OCI-LY7 (cell line): ENCODE measurements at regions of chr6 and their contacts with region 1.

Region 1: GRCh38 chr6:89412071-89413005 is at the start of gene RRAGD:
- DNase-seq: peak; percentile 74
- H3K4me3 ChIP-seq: peak within 1 kb of the TSS; percentile 84
- H3K27ac ChIP-seq: peak within 1 kb of the TSS; percentile 12
- H3K4me1 ChIP-seq: peaks cover 38% of the 10 kb centered on the region
- CTCF ChIP-seq: peak; percentile 37; the same call in 1 of the 2 replicates
- total RNA-seq, gene RRAGD: 6.2 and 6.5 TPM in 2 replicates

Region 2: DNA sequence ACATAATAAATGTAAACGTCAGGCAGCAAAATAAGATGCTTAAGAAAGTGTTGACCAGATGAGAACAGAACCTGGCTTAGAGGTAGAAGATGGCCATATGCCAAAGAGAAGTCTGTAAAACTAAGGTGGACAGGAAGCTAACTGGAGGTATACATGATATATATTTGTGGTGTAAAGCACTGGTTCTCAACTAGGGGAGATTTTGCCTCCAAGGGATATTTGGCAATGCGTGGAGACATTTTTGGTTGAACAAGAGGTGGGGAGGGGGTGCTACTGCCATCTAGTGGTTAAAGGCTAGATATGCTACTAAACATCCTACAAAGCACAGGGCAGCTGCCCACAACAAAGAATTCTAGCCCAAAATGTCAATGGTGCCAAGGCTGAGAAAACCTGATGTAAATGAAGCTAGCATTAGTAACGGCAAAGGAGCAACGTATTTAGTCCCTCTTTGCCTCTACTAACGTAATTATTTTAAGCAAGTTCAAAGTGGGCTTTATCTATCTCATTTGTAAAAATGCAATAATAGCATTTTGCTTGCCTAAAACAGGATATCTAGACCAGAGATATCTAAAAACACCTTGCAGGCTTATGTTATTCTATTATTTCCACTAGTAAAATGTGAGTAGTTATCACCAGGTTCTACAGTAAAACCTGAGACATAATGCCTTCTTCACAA is 631.5 kb before region 1 on chr6:
- CTCF ChIA-PET with region 1: no interaction called
- POLR2A ChIA-PET with region 1: no interaction called
- intact Hi-C with region 1: no loop called
- DNase-seq: peak; percentile 89
- H3K4me3 ChIP-seq: no peak overlapping the region
- H3K27ac ChIP-seq: no peak overlapping the region
- H3K4me1 ChIP-seq: peaks cover 16% of the 10 kb centered on the region
- CTCF ChIP-seq: peak; percentile 98

Region 3: DNA sequence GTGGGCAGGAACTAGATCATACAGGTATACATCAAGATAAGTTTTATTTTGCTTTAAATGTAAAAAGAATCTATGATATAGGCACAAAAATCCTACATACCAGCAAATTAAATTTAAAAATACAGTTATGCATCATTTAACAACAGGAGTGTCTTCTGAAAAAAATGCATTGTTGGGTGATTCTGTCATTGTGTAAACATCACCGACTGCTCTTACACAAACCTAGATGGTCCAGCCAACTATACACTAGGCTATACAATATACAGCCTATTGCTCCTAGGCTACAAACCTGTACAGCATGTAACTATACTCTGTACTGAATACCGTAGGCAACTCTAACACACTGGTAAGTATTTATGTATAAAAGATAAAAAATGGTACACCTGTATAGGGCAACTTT is 588.3 kb before region 1 on chr6:
- CTCF ChIA-PET with region 1: no interaction called
- POLR2A ChIA-PET with region 1: no interaction called
- intact Hi-C with region 1: no loop called
- DNase-seq: no peak
- H3K4me3 ChIP-seq: no peak overlapping the region
- H3K27ac ChIP-seq: no peak overlapping the region
- H3K4me1 ChIP-seq: no peaks in the 10 kb centered on the region
- CTCF ChIP-seq: no peak

Region 4: GRCh38 chr6:89048985-89049384 is 363.4 kb before region 1 on chr6:
- CTCF ChIA-PET with region 1: no interaction called
- POLR2A ChIA-PET with region 1: no interaction called
- intact Hi-C with region 1: no loop called
- DNase-seq: no peak
- H3K4me3 ChIP-seq: no peak overlapping the region
- H3K27ac ChIP-seq: no peak overlapping the region
- H3K4me1 ChIP-seq: no peaks in the 10 kb centered on the region
- CTCF ChIP-seq: no peak

Region 5: DNA sequence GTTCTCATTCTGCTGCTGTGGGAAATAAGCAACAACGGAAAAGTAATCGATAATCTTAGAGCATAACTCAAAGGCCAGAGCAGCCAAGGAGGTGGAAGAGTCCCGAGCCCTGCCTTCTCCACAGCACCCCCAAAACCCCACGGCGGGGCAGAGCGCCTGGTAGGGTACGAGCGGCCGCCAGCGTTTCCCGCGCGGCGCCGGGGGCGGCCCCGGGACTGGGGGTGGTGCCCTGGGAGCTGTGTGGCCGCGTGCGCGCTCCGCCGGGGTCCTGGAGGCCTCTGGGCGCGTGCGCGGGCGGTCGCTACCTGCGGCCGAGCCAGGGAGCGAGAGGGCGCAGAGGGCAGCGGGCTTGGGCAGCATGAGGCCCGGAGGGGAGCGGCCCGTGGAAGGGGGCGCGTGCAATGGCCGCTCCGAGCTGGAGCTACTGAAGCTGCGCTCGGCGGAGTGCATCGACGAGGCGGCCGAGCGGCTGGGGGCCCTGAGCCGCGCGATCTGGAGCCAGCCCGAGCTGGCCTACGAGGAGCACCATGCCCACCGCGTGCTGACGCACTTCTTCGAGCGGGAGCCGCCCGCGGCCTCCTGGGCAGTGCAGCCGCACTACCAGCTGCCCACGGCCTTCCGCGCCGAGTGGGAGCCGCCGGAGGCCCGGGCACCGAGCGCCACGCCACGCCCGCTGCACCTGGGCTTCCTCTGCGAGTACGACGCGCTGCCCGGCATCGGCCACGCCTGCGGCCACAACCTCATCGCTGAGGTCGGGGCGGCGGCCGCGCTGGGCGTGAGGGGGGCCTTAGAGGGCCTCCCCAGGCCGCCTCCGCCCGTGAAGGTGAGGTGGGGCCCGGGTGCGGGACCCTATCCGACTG is 266.3 kb before region 1 on chr6 and contains the start of gene PM20D2:
- CTCF ChIA-PET with region 1: no interaction called
- POLR2A ChIA-PET with region 1: no interaction called
- intact Hi-C with region 1: loop called (anchors 5 kb)
- DNase-seq: peak; percentile 86
- H3K4me3 ChIP-seq: peak within 1 kb of the TSS; percentile 76
- H3K27ac ChIP-seq: peak within 1 kb of the TSS; percentile 76
- H3K4me1 ChIP-seq: peaks cover 41% of the 10 kb centered on the region
- CTCF ChIP-seq: no peak
- total RNA-seq, gene PM20D2: 33.1 and 35.1 TPM in 2 replicates

Region 6: DNA sequence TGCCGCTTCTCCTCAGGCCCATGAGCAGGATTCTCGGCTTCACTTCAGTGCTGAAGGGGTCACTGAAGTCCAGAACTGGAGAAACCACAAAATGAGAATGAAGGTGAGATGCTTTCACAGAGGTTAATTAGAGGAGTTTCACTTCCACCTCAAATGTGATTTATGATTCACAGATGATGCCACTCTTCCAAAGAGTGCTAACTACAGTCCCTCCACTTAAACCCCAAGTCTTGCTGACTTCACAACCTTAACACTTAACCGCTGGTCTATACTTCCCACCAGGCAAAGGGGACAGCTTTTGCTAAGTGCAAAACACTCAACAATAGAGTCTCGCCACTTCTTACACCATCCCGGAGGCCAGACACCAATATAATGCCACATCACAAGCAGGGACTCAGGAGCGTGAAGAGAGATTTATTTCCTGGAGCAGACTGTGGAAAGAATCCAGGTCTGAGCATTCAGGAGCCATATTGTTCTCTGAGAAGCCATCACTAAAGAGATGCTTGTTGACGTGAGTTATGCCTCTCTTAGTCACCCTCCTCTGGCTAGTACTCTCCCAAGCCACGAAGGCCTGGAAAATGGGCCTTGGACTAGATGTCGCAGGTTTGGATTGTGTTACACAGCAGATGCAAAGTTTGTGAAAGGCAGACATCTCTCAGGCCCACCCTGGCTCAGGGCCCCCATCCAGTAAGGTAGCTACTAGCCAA is 24.7 kb before region 1 on chr6:
- CTCF ChIA-PET with region 1: no interaction called
- POLR2A ChIA-PET with region 1: interaction called, 5 read pairs
- intact Hi-C with region 1: loop called (anchors 1 kb)
- DNase-seq: peak; percentile 90
- H3K4me3 ChIP-seq: peak overlapping the region; percentile 56
- H3K27ac ChIP-seq: peak overlapping the region; percentile 83
- H3K4me1 ChIP-seq: peaks cover 56% of the 10 kb centered on the region
- CTCF ChIP-seq: no peak

Region 7: DNA sequence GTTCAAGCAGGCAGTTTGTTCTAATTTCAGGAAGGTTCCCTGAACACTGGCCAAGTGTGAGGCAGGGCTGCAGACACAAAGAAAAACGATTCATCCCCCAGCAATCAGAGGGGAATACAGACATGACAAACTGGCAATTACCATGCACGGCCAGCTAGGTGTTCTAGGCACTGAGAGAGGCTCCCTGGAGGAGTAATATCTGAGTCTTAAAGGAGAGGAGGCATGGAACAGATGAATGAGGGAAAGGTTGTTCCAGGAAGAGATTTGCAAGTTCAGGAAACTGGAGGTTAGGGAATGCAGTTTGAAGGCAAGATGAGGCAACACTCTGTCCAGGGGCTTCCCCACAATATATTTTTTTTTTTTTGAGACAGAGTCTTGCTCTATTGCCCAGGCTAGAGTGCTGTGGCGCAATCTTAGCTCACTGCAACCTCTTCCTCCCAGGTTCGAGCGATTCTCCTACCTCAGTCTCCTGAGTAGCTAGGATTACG is 11.4 kb before region 1 on chr6:
- CTCF ChIA-PET with region 1: no interaction called
- POLR2A ChIA-PET with region 1: interaction called, 15 read pairs
- intact Hi-C with region 1: no loop called
- DNase-seq: no peak
- H3K4me3 ChIP-seq: no peak overlapping the region
- H3K27ac ChIP-seq: no peak overlapping the region
- H3K4me1 ChIP-seq: peaks cover 39% of the 10 kb centered on the region
- CTCF ChIP-seq: no peak

Region 8: GRCh38 chr6:89675949-89676748 is 263.8 kb after region 1 on chr6:
- CTCF ChIA-PET with region 1: no interaction called
- POLR2A ChIA-PET with region 1: no interaction called
- intact Hi-C with region 1: no loop called
- DNase-seq: no peak
- H3K4me3 ChIP-seq: no peak overlapping the region
- H3K27ac ChIP-seq: no peak overlapping the region
- H3K4me1 ChIP-seq: no peaks in the 10 kb centered on the region
- CTCF ChIP-seq: no peak